GM12878 (cell line): ENCODE measurements at regions of chr10 and their contacts with region 1.

Region 1: DNA sequence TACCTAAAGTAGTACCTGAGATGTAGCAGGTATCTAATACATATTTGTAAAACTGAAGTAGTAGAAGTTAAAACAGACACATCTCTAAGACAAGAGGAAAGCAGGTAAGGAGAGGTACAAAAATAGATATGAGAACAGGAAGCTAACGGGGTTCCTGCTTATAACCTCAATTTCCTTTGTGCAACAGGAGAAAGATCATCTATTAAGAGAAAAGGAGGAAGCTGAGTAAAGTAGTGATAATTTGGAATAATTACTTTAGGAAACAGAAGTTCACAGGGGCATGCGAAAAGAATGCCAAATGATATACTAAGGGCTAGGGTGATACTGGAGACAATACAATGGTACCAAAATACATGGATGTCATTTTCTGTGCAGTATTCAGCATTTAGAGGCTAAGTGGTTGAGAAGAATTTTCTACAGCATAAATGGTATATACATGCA is 108.7 kb downstream of the NRBF2 start:
- DNase-seq: no peak
- ATAC-seq: peak; percentile 37
- H3K4me3 ChIP-seq: peak overlapping the region; percentile 21; the same call in 1 of the 2 replicates
- H3K27ac ChIP-seq: no peak overlapping the region
- H3K4me1 ChIP-seq: peaks cover 25% of the 10 kb centered on the region
- H3K27me3 ChIP-seq: no peaks in the 10 kb centered on the region
- CTCF ChIP-seq: no peak
- EP300 ChIP-seq: no peak
- POLR2A ChIP-seq: no peak
- RAD21 ChIP-seq: no peak

Region 2: DNA sequence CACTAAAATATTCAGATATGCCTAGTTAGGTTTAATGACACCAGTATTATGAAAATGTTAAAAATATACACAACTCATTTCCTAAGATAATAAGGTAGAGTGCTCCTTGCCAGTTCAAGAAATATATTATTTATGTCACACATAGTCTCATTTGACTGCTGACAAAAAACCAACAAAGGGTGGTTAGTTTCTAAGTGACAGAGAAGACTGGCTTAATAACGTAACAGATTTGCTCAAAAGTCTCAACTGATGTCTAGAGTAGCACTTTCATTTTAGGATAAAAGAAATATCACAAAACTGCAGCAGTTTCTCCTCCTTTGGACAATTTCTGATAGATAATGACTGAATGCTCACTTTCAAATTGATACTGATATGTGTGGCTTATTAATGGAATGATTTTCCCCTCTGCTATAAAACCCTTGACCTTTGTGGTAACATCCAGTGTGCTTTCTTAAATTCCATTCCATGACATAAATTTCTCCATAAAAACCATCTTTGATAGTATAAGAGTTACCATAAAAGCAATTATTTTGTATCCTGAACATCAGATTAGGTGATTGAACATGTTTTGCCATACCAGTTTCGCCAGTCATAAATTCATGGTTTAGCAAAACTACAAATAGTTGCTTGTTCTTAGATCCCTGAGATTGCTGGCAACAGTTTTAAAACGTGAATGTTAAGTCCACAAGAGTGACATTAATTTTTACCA is 14.5 kb before region 1 on chr10:
- CTCF ChIA-PET with region 1: interaction called, 5 read pairs
- POLR2A ChIA-PET with region 1: interaction called, 12 read pairs
- RAD21 ChIA-PET with region 1: interaction called, 3 read pairs
- SMC1A ChIA-PET with region 1: interaction called, 20 read pairs
- in situ Hi-C with region 1: no loop called
- intact Hi-C with region 1: no loop called
- DNase-seq: no peak
- ATAC-seq: peak; percentile 79
- H3K4me3 ChIP-seq: no peak overlapping the region
- H3K27ac ChIP-seq: peak overlapping the region; percentile 66
- H3K4me1 ChIP-seq: peaks cover 27% of the 10 kb centered on the region
- H3K27me3 ChIP-seq: no peaks in the 10 kb centered on the region
- CTCF ChIP-seq: no peak
- EP300 ChIP-seq: no peak
- POLR2A ChIP-seq: no peak
- RAD21 ChIP-seq: no peak